ENCODE measurements at regions of chr18 and their contacts with region 1.

Region 1: DNA sequence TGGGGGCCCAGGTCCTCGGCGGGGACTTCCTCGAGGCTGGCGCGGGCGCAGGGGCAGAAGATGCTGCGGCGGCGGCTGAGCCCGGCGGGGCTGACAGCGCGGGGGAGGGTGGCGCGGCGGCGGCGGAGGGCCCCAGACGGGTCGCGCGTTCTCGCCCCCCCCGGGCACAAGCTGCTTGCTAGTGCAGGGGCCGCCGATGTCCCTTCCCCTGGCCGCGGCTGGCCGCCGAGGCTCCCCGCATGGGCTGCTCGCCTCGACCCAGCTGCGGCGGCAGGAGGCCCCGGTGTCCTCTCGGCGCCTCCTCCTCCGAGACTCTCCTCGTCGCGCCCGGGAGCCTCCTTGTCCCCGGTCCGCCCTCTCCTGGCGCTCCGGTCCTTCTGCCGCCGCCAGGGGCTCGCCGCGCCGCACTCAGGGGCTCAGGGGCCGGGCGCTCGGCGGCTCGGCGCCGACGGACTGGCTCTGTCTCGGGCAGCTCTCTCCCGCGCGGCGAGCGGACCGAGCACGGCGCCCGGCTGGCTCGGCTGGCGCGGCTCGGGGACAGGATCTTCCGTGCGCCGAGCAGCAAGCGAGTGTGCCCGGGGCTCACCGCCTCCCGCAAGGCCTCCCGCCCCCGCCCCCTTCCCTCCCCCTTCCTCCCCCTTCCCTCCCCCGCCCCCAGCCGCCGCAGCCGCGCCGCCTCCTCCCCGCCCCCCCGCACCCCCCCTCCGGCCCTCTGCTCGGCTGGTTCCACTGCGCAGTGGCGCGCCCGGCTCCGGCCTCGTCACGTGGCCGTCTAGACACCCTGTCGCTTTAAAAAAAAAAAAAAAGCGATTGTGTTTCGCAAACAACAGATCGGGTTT is 902 bp upstream of the SMAD7 start:
- DNase-seq: peak; percentile 68
- H3K4me3 Mint-ChIP-seq: peak overlapping the region; percentile 98
- H3K27ac Mint-ChIP-seq: peak overlapping the region; percentile 96
- H3K4me1 Mint-ChIP-seq: peaks cover 45% of the 10 kb centered on the region
- H3K27me3 Mint-ChIP-seq: peaks cover 14% of the 10 kb centered on the region

Region 2: DNA sequence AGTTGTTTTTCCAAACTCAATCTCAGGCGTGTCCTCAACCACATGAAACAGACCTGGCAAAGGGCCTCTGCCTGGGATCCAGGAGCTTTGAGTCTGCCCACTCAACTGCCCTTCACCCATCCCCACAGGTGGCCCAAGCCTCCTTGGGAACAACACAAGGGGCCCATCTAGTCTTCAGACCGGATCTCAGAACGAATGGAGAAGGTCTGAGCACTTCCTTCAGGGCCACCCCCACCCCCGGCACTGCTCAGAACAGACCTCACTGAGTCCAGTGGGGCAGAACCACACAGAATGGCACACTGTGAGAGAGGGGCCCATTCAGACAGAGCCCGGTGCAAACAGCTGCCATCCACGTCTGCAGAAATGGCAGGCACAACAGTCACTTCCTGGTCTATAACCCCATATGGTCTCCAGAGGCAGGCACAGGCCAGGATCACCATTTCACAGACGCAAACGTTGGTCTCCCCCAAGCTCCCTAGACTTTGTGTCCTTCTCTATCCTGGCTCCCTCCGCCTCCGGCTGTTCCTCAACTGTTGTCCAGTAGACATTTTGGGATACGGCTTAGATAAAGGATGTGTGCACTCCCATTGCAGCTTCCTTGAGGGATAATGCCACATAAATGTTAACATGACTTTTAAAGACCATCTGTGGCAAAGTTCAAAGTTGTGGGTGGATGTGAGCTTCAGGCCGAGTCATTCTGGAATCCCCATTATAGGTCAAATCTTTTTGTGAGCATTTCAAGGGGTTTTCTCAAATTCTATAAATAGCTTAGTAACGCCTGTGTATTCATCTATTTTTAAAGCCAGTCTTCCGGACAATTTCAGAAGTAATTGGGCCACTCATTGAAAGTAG is 150.6 kb before region 1 on chr18:
- intact Hi-C with region 1: loop called (anchors 1 kb)
- DNase-seq: no peak
- H3K4me3 Mint-ChIP-seq: peak overlapping the region; percentile 75
- H3K27ac Mint-ChIP-seq: peak overlapping the region; percentile 99
- H3K4me1 Mint-ChIP-seq: peaks cover 66% of the 10 kb centered on the region
- H3K27me3 Mint-ChIP-seq: no peaks in the 10 kb centered on the region

Region 3: DNA sequence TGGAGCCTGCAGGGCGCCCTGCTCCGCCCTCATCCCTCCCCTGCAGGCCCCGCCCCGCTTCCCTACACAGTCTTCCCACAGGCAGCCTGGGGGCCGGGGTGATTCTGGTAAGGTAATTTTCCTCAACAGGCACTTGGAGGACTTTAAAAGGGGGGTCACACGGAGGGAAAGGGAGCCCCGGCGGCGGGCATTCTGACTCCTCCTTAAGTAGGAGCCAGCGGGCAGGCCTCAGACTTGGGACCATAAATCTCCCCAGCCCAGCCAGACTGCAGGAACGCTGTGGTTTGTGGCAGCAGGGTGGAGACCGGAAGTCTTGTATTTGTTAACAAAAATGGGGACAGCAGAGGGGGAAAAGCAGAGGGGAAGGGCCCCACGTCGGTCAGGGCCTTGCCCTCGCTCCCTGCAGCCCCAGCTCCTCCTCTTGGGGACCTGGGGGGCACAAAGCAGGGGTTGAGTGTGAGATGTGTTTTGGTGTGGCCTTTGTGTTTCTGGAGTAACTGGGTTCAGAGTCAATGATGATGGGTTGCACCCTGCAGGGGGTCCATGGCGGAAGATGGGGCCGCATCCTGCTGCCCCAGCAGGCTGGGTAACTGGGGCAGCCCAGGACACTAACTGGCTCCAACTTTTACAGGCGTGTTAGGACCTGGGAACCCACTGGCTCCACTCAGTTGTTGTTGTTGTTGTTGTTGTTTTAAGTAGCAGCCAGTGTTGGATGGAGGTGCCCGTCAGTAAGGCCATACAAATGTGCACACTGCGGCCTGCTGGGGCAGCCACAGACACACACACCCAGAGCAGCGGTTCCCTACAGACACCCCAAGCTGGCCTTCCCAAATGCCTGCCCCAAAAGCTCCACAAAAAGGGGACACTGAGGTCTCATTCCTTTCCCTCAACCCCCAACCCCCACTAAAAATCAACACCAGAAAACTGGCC is 28.6 kb before region 1 on chr18:
- intact Hi-C with region 1: no loop called
- DNase-seq: no peak
- H3K4me3 Mint-ChIP-seq: peak overlapping the region; percentile 49
- H3K27ac Mint-ChIP-seq: peak overlapping the region; percentile 96
- H3K4me1 Mint-ChIP-seq: peaks cover 75% of the 10 kb centered on the region
- H3K27me3 Mint-ChIP-seq: no peaks in the 10 kb centered on the region

Region 4: GRCh38 chr18:48934723-48935432 is 16.8 kb before region 1 on chr18:
- intact Hi-C with region 1: loop called (anchors 1 kb)
- DNase-seq: no peak
- H3K4me3 Mint-ChIP-seq: peak overlapping the region; percentile 48
- H3K27ac Mint-ChIP-seq: peak overlapping the region; percentile 75
- H3K4me1 Mint-ChIP-seq: peaks cover 82% of the 10 kb centered on the region
- H3K27me3 Mint-ChIP-seq: no peaks in the 10 kb centered on the region

Region 5: GRCh38 chr18:48975649-48976204 is 24.1 kb after region 1 on chr18:
- intact Hi-C with region 1: loop called (anchors 1 kb)
- DNase-seq: peak; percentile 19
- H3K4me3 Mint-ChIP-seq: no peak overlapping the region
- H3K27ac Mint-ChIP-seq: no peak overlapping the region
- H3K4me1 Mint-ChIP-seq: peaks cover 21% of the 10 kb centered on the region
- H3K27me3 Mint-ChIP-seq: peaks cover 42% of the 10 kb centered on the region

Region 6: GRCh38 chr18:49459404-49460171 is 507.9 kb after region 1 on chr18:
- intact Hi-C with region 1: loop called (anchors 10 kb)
- DNase-seq: no peak
- H3K4me3 Mint-ChIP-seq: peak overlapping the region; percentile 87
- H3K27ac Mint-ChIP-seq: peak overlapping the region; percentile 74
- H3K4me1 Mint-ChIP-seq: peaks cover 37% of the 10 kb centered on the region
- H3K27me3 Mint-ChIP-seq: peaks cover 5% of the 10 kb centered on the region

Measured in activated T-helper 1 cell treated with anti-CD3 and anti-CD28 coated beads, Interleukin-12 subunit alpha, Interleukin-12 subunit beta, Interleukin-2, Interleukin-4 antibody, amounts not matched to agents 30 ng/mL and 10 ng/mL and 1 ng/mL, durations not matched to agents 14 hours and 24 hours and 36 hours (primary cell).